ENCODE measurements at regions of chr9 and their contacts with region 1.

Region 1: GRCh38 chr9:98255578-98256296 is at the start of gene TBC1D2:
- DNase-seq: peak; percentile 98
- H3K27ac ChIP-seq: peak within 1 kb of the TSS; percentile 99
- CTCF ChIP-seq: no peak; the same call in 1 of the 2 replicates

Region 2: GRCh38 chr9:97921959-97922724 is 333.6 kb before region 1 on chr9 and contains the start of gene TRMO:
- CTCF ChIA-PET with region 1: interaction called, 9 read pairs
- POLR2A ChIA-PET with region 1: interaction called, 14 read pairs
- DNase-seq: peak; percentile 99
- H3K27ac ChIP-seq: peak within 1 kb of the TSS; percentile 97
- CTCF ChIP-seq: peak; percentile 97

Region 3: GRCh38 chr9:97982683-97983588 is 272.8 kb before region 1 on chr9 and contains the start of gene ANP32B:
- CTCF ChIA-PET with region 1: no interaction called
- POLR2A ChIA-PET with region 1: interaction called, 12 read pairs
- DNase-seq: peak; percentile 94
- H3K27ac ChIP-seq: peak within 1 kb of the TSS; percentile 96
- CTCF ChIP-seq: peak; percentile 100

Region 4: DNA sequence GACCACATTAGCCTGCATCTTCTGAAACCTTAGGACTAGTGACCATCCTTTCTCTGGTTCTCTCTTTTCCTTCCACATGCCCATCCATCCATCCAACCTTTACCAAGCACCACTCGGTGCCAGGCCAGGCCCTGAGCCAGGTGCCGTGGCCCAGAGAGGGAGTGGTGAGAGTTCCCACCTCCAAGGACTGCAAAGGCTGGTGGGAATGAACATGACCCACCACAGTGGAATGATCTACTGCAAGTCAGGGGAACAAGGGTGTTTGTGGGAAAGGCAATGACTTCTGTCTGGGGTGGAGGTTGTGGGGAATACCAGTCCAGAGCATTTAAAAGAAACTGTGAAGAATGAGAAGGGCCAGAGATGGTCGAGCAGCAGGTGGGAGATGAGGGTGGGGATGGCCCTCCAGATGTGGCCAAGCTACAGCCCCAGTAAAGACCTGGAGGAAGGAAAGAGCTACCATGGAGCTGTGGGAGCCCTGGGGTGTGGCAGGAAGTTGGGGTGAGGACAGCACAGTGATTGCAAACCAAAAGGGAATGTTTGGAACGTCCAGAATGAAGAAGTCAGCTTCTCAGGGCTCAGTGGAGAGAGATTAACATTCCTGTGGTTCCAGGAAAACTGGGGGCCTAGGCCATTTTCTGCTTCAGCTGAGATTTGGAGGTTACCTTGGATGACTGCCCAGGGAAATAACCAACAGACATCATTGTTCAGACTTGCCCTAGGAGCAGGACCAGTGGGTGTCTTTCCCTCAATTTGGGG is 32.7 kb before region 1 on chr9:
- CTCF ChIA-PET with region 1: interaction called, 10 read pairs
- POLR2A ChIA-PET with region 1: interaction called, 17 read pairs
- DNase-seq: peak; percentile 100
- H3K27ac ChIP-seq: peak overlapping the region; percentile 100
- CTCF ChIP-seq: no peak

Measured in RWPE1 (cell line).